ENCODE measurements at regions of chr18 and their contacts with region 1.

Region 1: DNA sequence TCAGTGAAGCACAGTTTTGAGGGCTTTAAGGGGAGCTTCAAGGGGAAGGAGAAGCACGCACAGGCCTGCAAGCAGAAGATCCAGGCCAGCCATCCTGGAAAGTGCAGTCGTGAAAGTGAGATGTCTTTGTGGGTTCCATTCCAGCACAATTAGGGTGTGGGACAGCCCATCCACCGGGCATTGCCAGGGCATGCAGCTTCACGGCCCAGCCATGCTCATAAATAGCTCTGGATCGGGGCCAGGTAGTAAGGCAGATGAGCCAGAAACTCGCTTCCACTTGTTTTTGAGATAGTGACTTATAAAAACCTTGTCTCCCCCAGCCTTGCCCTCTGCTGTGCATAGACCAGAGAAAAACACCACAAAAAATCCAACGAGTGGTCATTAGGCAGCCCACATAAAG is 21.0 kb downstream of the KDSR start:
- DNase-seq: peak; percentile 51 to 79 (median 71)
- ATAC-seq: peak; percentile 84 to 86
- H3K4me3 ChIP-seq: no peak overlapping the region
- H3K27ac ChIP-seq: peak overlapping the region; percentile 91
- H3K4me1 ChIP-seq: peaks cover 9% of the 10 kb centered on the region
- H3K27me3 ChIP-seq: no peaks in the 10 kb centered on the region

Region 2: DNA sequence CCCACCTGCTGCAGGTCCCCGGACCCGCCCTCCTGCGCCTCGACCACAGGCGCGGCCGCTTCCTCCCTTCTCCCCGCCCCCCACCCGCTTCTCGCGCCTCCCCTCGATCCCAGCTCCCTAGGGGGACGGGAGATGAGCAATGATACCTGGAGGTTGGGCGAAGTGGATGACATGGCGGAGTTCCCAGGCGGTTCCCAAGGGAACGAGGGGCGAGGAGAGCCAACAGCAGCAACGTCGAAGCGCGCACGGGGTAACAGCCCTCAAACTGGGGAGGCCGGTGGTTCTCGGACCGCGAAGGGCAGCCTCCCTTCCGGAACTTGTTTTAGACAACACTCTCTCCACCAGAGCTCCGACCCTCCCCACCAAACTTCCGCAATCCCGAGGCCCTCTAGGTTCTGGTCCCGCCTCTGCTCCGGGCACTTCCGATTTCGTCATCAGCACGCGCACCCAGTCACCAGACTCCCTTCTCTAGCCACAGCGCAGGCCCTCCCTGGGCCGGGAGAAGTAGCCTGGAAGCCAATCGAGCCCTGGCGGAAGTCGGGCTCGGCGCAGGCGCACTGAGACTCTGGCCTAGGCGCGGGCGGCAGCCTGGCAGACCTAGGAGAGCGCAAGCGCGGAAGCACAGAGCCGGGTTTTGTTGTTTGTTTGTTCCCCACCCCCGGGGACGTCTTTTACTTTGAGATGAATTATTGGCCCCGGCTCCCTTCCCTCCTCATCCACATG is 76.2 kb after region 1 on chr18 and contains the start of gene VPS4B:
- intact Hi-C with region 1: loop called in 1 of 4 experiments (anchors 5 kb)
- DNase-seq: peak; percentile 100
- ATAC-seq: peak; percentile 99 to 100
- H3K4me3 ChIP-seq: peak within 1 kb of the TSS; percentile 91
- H3K27ac ChIP-seq: peak within 1 kb of the TSS; percentile 98
- H3K4me1 ChIP-seq: peaks cover 4% of the 10 kb centered on the region
- H3K27me3 ChIP-seq: no peaks in the 10 kb centered on the region
- total RNA-seq, gene VPS4B: 21.4 to 28.8 (median 27.5) TPM

Region 3: GRCh38 chr18:63454497-63454896 is 108.5 kb after region 1 on chr18:
- intact Hi-C with region 1: no loop called
- DNase-seq: no peak
- ATAC-seq: no peak
- H3K4me3 ChIP-seq: no peak overlapping the region
- H3K27ac ChIP-seq: no peak overlapping the region
- H3K4me1 ChIP-seq: peaks cover 2% of the 10 kb centered on the region
- H3K27me3 ChIP-seq: no peaks in the 10 kb centered on the region

Region 4: GRCh38 chr18:63979409-63979920 is 633.4 kb after region 1 on chr18:
- intact Hi-C with region 1: no loop called
- DNase-seq: peak in 1 of 3 donors; percentile 58
- ATAC-seq: peak; percentile 85 to 86
- H3K4me3 ChIP-seq: peak overlapping the region; percentile 39
- H3K27ac ChIP-seq: no peak overlapping the region
- H3K4me1 ChIP-seq: no peaks in the 10 kb centered on the region
- H3K27me3 ChIP-seq: no peaks in the 10 kb centered on the region

Measured in right cardiac atrium (tissue), 5 donors.